ENCODE measurements at regions of chr1 and their contacts with region 1.

Region 1: DNA sequence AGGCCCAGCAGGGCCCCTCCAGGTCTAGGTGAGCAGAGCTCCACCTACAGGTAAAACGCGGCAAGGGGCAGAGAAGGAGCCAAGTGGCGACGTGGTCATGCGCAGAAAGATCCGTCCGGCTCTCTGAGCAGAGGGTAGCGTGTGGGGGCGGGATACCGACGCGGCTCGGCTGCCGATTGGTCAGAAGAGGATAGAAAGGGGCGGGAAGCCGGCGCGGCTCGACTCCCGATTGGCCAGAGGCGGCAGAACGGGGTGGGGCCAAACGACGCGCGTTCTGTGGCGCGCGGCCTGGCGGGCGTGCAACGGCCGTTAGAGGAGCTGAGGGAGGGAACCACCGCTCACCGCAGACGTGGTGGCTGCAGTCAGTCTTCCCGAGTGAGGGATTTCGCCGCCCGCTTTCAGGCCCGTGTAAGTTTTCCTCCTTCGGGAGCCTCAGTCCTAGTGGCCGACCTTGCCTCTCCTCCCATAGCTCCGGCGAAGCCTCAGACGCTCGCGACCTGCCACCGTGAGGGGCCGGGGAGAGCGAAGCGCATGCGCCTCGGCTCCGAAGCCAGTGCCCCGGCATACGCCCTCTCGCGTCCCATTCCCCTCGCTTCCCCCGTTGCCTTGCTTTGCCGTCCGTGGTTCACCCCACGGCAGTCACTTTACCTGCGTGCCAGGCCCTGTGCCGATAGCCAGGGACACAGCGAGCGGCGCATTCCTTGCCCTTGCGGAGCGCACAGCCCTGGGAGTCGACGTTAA is at the start of gene CEP85:
- DNase-seq: peak; percentile 93 to 99 (median 98)
- ATAC-seq: peak; percentile 96
- H3K4me3 ChIP-seq: peak within 1 kb of the TSS; percentile 91
- H3K4me3 Mint-ChIP-seq: peak within 1 kb of the TSS; percentile 89 to 99 (median 99)
- H3K27ac ChIP-seq: peak within 1 kb of the TSS; percentile 93
- H3K27ac Mint-ChIP-seq: peak within 1 kb of the TSS; percentile 87 to 99 (median 96)
- H3K4me1 ChIP-seq: peaks cover 4 to 13% of the 10 kb centered on the region in 2 donors
- H3K4me1 Mint-ChIP-seq: peaks cover 26 to 39% (median 38%) of the 10 kb centered on the region in 7 donors
- H3K27me3 ChIP-seq: no peaks in the 10 kb centered on the region
- H3K27me3 Mint-ChIP-seq: peaks cover 0 to 8% (median 0%) of the 10 kb centered on the region in 5 donors
- total RNA-seq, gene CEP85: 12.1 to 34.8 (median 20.7) TPM

Region 2: GRCh38 chr1:25599969-25600610 is 634.0 kb before region 1 on chr1:
- CTCF ChIA-PET with region 1: no interaction called
- POLR2A ChIA-PET with region 1: no interaction called
- intact Hi-C with region 1: no loop called
- DNase-seq: no peak
- ATAC-seq: no peak
- H3K4me3 ChIP-seq: no peak overlapping the region
- H3K4me3 Mint-ChIP-seq: no peak overlapping the region
- H3K27ac ChIP-seq: no peak overlapping the region
- H3K27ac Mint-ChIP-seq: no peak overlapping the region
- H3K4me1 ChIP-seq: no peaks in the 10 kb centered on the region
- H3K4me1 Mint-ChIP-seq: peaks cover 3 to 18% (median 8%) of the 10 kb centered on the region in 7 donors
- H3K27me3 ChIP-seq: no peaks in the 10 kb centered on the region
- H3K27me3 Mint-ChIP-seq: peaks cover 0 to 50% (median 0%) of the 10 kb centered on the region in 5 donors

Region 3: DNA sequence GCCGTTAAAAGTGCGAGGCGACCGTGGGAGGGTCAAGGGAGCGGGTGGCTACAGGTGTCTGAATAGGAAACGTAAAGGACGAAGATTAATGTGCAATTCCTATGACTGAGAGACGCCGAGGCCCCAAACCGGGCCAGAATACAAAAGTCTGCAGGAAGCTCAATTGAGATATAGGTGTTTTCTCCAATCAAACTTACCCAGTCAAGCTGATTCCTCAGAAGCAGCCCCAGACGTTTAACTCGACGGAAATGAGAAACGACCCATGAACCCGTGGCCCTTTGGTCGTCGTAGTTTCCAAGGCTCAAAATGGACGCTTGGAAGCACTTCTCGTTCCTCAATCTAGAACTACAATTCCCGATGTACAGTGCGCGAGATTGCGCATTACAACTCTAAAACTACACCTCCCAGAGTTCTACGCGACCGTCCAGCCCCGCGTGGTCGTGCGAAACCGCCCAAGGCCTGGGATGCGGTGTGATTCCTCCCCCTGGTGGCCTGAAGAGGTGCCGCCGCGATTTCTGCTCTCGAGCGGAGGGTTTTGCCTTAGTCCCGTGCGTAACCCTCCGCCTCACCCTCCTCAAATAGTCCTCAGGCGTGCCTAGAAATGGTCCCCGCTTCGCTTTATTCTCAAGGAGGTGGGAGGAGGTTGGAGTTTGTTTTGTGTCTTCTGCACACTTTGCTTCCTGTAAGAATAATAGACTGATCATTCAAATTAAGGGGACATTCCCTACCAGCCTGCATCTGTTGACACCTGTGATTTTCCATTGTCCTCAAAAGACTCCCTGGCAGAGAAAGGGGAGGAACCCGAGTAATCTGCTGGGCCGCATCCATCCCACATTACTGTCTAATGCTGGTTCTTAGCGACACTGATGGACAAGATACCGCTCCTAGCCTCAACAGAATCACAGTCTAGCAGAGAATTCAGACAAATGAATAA is 236.0 kb before region 1 on chr1 and contains the start of gene PAFAH2:
- CTCF ChIA-PET with region 1: no interaction called
- POLR2A ChIA-PET with region 1: no interaction called
- intact Hi-C with region 1: loop called in 1 of 2 experiments (anchors 1 kb)
- DNase-seq: peak; percentile 83 to 99 (median 98)
- ATAC-seq: peak; percentile 98
- H3K4me3 ChIP-seq: peak within 1 kb of the TSS; percentile 76
- H3K4me3 Mint-ChIP-seq: peak within 1 kb of the TSS; percentile 91 to 99 (median 96)
- H3K27ac ChIP-seq: peak within 1 kb of the TSS; percentile 89
- H3K27ac Mint-ChIP-seq: peak within 1 kb of the TSS; percentile 96 to 99 (median 99)
- H3K4me1 ChIP-seq: peaks cover 8 to 18% of the 10 kb centered on the region in 2 donors
- H3K4me1 Mint-ChIP-seq: peaks cover 19 to 50% (median 40%) of the 10 kb centered on the region in 7 donors
- H3K27me3 ChIP-seq: no peaks in the 10 kb centered on the region
- H3K27me3 Mint-ChIP-seq: no peaks in the 10 kb centered on the region
- total RNA-seq, gene PAFAH2: 11.4 to 36.0 (median 12.7) TPM

Region 4: GRCh38 chr1:26111530-26112406 is 122.3 kb before region 1 on chr1 and contains the start of gene PDIK1L:
- CTCF ChIA-PET with region 1: interaction called, 3 read pairs
- POLR2A ChIA-PET with region 1: interaction called, 4 read pairs
- intact Hi-C with region 1: loop called (anchors 1 kb)
- DNase-seq: peak; percentile 91 to 95 (median 94)
- ATAC-seq: peak; percentile 93
- H3K4me3 ChIP-seq: peak within 1 kb of the TSS; percentile 93
- H3K4me3 Mint-ChIP-seq: peak within 1 kb of the TSS; percentile 86 to 99 (median 93)
- H3K27ac ChIP-seq: peak within 1 kb of the TSS; percentile 84
- H3K27ac Mint-ChIP-seq: peak within 1 kb of the TSS; percentile 84 to 98 (median 92)
- H3K4me1 ChIP-seq: peaks cover 12 to 19% of the 10 kb centered on the region in 2 donors
- H3K4me1 Mint-ChIP-seq: peaks cover 6 to 44% (median 34%) of the 10 kb centered on the region in 7 donors
- H3K27me3 ChIP-seq: no peaks in the 10 kb centered on the region
- H3K27me3 Mint-ChIP-seq: no peaks in the 10 kb centered on the region
- total RNA-seq, gene PDIK1L: 9.1 to 29.6 (median 20.3) TPM

Region 5: GRCh38 chr1:26190373-26190987 is 43.6 kb before region 1 on chr1 and contains the start of gene CATSPER4:
- CTCF ChIA-PET with region 1: interaction called, 9 read pairs
- POLR2A ChIA-PET with region 1: no interaction called
- intact Hi-C with region 1: loop called (anchors 1 to 5 kb)
- DNase-seq: peak in 3 of 9 donors; percentile 19 to 27 (median 20)
- ATAC-seq: no peak
- H3K4me3 ChIP-seq: no peak within 1 kb of the TSS
- H3K4me3 Mint-ChIP-seq: peak within 1 kb of the TSS in 3 of 10 donors; percentile 4 to 77 (median 65)
- H3K27ac ChIP-seq: no peak within 1 kb of the TSS
- H3K27ac Mint-ChIP-seq: peak within 1 kb of the TSS in 6 of 9 donors; percentile 11 to 78 (median 60)
- H3K4me1 ChIP-seq: peaks cover 0 to 8% of the 10 kb centered on the region in 2 donors
- H3K4me1 Mint-ChIP-seq: peaks cover 8 to 37% (median 23%) of the 10 kb centered on the region in 7 donors
- H3K27me3 ChIP-seq: no peaks in the 10 kb centered on the region
- H3K27me3 Mint-ChIP-seq: peaks cover 0 to 4% (median 0%) of the 10 kb centered on the region in 5 donors
- total RNA-seq, gene CATSPER4: not detected

Region 6: DNA sequence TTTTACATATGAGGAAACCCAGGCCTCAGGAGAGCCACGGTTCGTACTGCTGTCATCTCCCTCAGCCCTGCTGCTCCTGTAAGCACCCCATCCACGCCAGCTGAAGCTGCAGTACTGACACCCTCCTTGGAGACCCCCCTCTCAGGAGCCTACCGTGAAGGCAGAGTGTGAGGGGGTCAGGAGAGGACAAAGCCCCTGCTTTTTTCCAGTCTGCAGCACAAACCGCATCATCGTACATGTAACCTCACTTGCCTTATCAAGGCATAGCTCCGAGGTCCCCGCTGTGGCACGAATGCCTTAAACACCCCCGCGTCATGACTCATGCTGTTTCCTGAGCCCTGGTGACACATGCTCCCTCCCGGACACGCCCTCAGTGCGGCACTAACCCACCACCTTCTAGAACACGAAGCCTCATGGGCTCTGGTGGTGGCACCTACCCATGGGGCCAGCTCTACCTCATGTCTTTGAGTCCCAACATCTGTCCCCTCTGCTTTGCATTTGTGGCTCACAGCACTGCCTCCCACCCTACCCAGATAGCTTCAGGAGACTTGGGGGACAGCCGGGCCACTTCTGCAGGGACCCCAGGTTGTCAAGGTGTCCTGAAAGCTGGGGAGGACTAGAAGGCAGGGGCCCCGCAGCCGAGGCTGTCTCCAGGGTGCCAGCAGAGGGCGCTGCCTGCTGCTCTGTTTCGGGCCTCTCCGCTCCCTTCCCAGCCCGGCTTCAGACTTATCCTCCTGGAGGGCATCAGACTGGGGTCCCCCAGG is 50.7 kb after region 1 on chr1:
- CTCF ChIA-PET with region 1: interaction called, 3 read pairs
- POLR2A ChIA-PET with region 1: interaction called, 13 read pairs
- intact Hi-C with region 1: loop called in 1 of 2 experiments (anchors 2 kb)
- DNase-seq: peak; percentile 60 to 97 (median 87)
- ATAC-seq: peak; percentile 81
- H3K4me3 ChIP-seq: peak overlapping the region; percentile 18
- H3K4me3 Mint-ChIP-seq: peak overlapping the region; percentile 44 to 88 (median 76)
- H3K27ac ChIP-seq: peak overlapping the region; percentile 86
- H3K27ac Mint-ChIP-seq: peak overlapping the region; percentile 90 to 99 (median 97)
- H3K4me1 ChIP-seq: peaks cover 89 to 91% of the 10 kb centered on the region in 2 donors
- H3K4me1 Mint-ChIP-seq: peaks cover 62 to 94% (median 86%) of the 10 kb centered on the region in 7 donors
- H3K27me3 ChIP-seq: no peaks in the 10 kb centered on the region
- H3K27me3 Mint-ChIP-seq: no peaks in the 10 kb centered on the region

Region 7: GRCh38 chr1:26417111-26417759 is 183.2 kb after region 1 on chr1:
- CTCF ChIA-PET with region 1: interaction called, 17 read pairs
- POLR2A ChIA-PET with region 1: no interaction called
- intact Hi-C with region 1: loop called in 1 of 2 experiments (anchors 2 kb)
- DNase-seq: peak; percentile 57 to 81 (median 76)
- ATAC-seq: peak; percentile 99
- H3K4me3 ChIP-seq: no peak overlapping the region
- H3K4me3 Mint-ChIP-seq: no peak overlapping the region
- H3K27ac ChIP-seq: no peak overlapping the region
- H3K27ac Mint-ChIP-seq: no peak overlapping the region
- H3K4me1 ChIP-seq: no peaks in the 10 kb centered on the region
- H3K4me1 Mint-ChIP-seq: peaks cover 0 to 3% (median 0%) of the 10 kb centered on the region in 7 donors
- H3K27me3 ChIP-seq: peaks cover 0 to 3% of the 10 kb centered on the region in 2 donors
- H3K27me3 Mint-ChIP-seq: peaks cover 17 to 65% (median 19%) of the 10 kb centered on the region in 5 donors